Activated CD8-positive, alpha-beta memory T cell treated with anti-CD3 and anti-CD28 coated beads, Interleukin-2, amount 10 ng/mL, durations not matched to agents 7 days and 5 days (primary cell): ENCODE measurements at regions of chr3 and their contacts with region 1.

Region 1: DNA sequence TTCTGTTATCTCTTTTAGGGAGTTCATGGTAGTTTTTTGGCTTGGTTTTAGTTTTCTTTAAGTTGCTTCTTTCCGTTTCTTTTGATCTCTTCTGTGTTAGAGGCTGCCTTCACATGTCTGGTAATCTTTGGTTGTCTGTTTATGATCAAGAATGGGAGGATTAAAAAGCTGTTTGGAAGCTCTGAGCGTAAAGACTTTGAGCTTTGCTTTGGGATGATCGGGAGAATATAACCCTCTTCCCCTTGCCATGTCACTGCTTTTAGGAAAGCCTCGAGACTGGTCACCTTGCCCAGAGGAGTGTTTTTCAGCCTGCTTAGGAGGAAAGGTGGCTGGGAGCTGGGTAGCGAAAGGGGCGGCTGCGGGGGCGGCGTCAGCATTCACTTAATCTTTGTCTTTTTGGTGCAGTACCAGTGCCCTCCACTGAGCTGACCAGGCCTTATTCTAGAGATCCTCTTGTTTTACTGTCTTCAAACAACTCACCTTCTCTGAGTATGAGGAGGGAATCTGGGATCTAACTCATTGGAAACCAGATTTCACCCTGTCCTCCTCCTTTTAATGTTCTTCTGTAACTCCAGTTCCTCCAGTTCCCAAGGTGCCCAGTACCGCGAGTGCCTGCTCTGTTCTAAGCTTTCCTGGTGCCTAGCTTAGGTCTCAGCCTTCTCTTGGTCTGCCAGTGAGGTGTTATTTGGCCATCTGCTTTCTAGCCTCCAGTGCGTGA is 15.5 kb downstream of the TATDN2 start:
- DNase-seq: peak; percentile 76
- ATAC-seq: peak; percentile 97
- H3K4me3 Mint-ChIP-seq: peak overlapping the region; percentile 54
- H3K27ac Mint-ChIP-seq: peak overlapping the region; percentile 65
- H3K4me1 Mint-ChIP-seq: peaks cover 65% of the 10 kb centered on the region
- H3K27me3 Mint-ChIP-seq: no peaks in the 10 kb centered on the region

Region 2: DNA sequence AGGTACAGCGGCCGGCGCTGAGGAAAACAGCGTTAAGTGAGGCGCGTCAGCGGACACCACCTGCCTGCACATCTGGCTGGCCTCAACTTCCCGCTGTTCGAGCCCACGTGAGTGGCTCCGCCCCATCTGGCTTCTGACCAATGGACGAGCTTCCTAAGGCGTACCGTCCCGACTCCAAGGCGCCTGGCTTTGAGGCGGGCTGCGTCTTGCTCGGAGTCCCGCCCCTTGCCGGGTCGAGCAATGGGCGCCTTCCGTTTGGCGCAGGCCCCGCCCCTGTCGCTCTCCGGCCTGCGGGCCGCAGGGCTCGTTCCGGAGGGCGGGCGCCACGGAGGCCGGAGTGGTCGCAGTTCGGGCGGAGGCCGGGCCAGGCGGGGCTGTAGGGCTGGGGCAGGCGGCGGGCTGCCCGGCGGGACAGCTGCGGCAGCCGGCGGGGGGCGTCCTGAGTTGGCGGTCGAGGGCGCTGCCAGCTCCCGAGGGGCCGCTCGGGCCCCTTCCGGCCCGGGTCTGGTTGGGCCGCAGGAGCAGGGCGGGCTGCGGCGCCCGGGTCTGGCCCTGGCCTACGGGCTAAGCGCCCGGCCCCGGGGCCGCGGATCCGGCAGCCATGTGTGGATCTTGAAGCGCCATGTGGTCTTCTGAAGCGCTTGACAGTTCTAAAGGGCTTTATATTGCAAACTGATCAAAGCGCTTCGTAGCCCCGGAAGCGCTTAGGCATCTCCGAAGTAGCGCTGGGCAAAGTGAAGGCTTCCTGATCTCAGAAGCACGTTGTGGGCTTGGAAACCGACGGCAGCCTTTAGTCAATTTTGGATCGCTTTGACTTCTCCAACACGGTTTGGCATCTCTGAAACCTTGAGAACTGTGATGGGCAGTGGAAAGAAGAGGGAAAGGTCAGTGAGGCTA is 15.4 kb before region 1 on chr3 and contains the start of gene TATDN2:
- CTCF ChIA-PET with region 1: interaction called, 12 read pairs
- DNase-seq: peak; percentile 98
- ATAC-seq: peak; percentile 96
- H3K4me3 Mint-ChIP-seq: peak within 1 kb of the TSS; percentile 98
- H3K27ac Mint-ChIP-seq: peak within 1 kb of the TSS; percentile 96
- H3K4me1 Mint-ChIP-seq: peaks cover 48% of the 10 kb centered on the region
- H3K27me3 Mint-ChIP-seq: no peaks in the 10 kb centered on the region
- total RNA-seq, gene TATDN2: 60.2 to 67.1 TPM

Region 3: GRCh38 chr3:10253731-10254130 is 10.1 kb before region 1 on chr3:
- CTCF ChIA-PET with region 1: interaction called, 12 read pairs
- DNase-seq: no peak
- ATAC-seq: no peak
- H3K4me3 Mint-ChIP-seq: no peak overlapping the region
- H3K27ac Mint-ChIP-seq: no peak overlapping the region
- H3K4me1 Mint-ChIP-seq: peaks cover 59% of the 10 kb centered on the region
- H3K27me3 Mint-ChIP-seq: no peaks in the 10 kb centered on the region

Region 4: DNA sequence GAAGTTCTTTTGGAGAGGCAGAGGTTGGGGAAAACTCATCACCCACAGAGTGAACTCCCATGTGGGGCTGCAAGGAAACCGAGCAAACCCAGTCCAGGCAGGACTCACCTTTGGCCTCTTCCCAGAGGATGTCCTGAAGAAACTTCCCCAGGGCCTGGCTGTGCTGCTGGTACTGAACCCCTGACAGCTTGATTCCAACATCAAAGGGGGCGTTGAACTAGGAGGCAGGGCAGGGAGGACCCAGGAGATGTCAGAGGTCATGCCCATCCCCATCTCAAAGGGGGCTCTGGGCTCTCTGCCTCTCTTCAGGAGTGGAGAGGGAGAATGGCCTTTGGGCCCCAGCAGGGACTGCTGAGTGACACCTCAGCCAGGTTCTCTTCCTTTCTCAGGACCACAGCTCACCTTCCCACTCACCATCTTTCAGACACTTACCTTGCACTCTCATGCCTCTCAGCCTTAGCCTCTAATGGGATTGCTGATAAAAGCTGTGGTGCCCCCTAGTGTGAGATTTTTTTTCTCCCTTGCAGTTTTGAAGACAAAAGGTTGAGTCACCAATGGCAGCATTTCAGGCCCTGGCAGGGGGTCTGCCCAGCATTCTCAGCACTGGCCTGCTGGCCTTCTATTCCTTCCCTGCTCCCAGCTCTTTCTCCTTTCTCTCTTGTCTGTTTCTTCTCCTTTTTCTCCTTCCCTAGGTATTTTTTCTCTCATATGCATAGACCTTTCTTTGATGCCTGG is 23.0 kb after region 1 on chr3:
- CTCF ChIA-PET with region 1: interaction called, 15 read pairs
- DNase-seq: peak; percentile 58
- ATAC-seq: peak; percentile 48
- H3K4me3 Mint-ChIP-seq: no peak overlapping the region
- H3K27ac Mint-ChIP-seq: no peak overlapping the region
- H3K4me1 Mint-ChIP-seq: peaks cover 35% of the 10 kb centered on the region
- H3K27me3 Mint-ChIP-seq: no peaks in the 10 kb centered on the region